ENCODE measurements at regions of chr16 and their contacts with region 1.

Region 1: GRCh38 chr16:69396187-69397061 is 10.6 kb upstream of the TERF2 start:
- DNase-seq: peak; percentile 71
- ATAC-seq: peak; percentile 27; the same call in 1 of the 2 replicates
- H3K4me3 Mint-ChIP-seq: no peak overlapping the region
- H3K27ac Mint-ChIP-seq: peak overlapping the region; percentile 22
- H3K4me1 Mint-ChIP-seq: peaks cover 12% of the 10 kb centered on the region
- H3K27me3 Mint-ChIP-seq: 0 out of 2 replicates have a peak, but pooled peaks cover 3% of the 10 kb centered on the region
- CTCF ChIP-seq: no peak; the same call in 1 of the 2 replicates

Region 2: DNA sequence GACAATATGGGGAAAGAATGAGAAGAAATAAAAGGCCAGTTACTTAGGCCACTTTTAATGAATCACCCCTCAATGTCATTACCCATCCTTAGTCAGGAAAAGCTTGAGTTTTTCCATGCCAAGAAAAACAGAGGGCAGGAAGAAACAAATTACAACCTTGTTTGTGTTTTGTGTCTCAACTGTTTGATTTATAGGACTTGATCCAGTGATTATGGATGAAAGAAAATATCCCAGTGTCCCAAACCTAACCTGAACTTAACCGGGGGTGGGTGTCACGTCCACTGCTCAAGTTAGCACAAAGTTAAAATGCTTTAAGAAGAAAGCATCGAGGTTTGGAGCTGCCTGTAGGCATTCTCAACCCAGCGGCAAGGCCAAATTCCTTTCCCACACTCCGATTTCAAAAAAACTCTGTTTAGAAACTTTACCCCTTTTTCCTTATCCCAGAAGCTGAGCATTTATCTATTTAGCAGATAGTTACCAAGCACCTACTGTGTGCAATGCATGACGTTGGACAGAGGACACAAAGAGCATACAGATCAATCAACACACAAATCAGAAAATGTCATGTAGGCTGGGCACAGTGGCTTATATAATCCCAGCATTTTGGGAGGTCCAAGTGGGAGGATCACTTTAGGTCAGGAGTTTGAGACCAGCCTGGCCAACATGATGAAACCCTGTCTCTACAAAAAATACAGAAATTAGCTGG is 14.0 kb after region 1 on chr16:
- CTCF ChIA-PET with region 1: interaction called, 17 read pairs
- POLR2A ChIA-PET with region 1: interaction called, 4 read pairs
- DNase-seq: no peak
- ATAC-seq: no peak
- H3K4me3 Mint-ChIP-seq: no peak overlapping the region
- H3K27ac Mint-ChIP-seq: no peak overlapping the region
- H3K4me1 Mint-ChIP-seq: no peaks in the 10 kb centered on the region
- H3K27me3 Mint-ChIP-seq: no peaks in the 10 kb centered on the region
- CTCF ChIP-seq: no peak

Region 3: GRCh38 chr16:69467531-69468204 is 71.2 kb after region 1 on chr16:
- CTCF ChIA-PET with region 1: interaction called, 13 read pairs
- POLR2A ChIA-PET with region 1: no interaction called
- DNase-seq: no peak
- ATAC-seq: no peak
- H3K4me3 Mint-ChIP-seq: no peak overlapping the region
- H3K27ac Mint-ChIP-seq: no peak overlapping the region
- H3K4me1 Mint-ChIP-seq: peaks cover 4% of the 10 kb centered on the region
- H3K27me3 Mint-ChIP-seq: no peaks in the 10 kb centered on the region
- CTCF ChIP-seq: no peak

Region 4: GRCh38 chr16:69494993-69495392 is 98.6 kb after region 1 on chr16:
- CTCF ChIA-PET with region 1: interaction called, 11 read pairs
- POLR2A ChIA-PET with region 1: no interaction called
- DNase-seq: peak; percentile 77
- ATAC-seq: peak; percentile 86
- H3K4me3 Mint-ChIP-seq: no peak overlapping the region
- H3K27ac Mint-ChIP-seq: peak overlapping the region; percentile 68; the same call in 1 of the 2 replicates
- H3K4me1 Mint-ChIP-seq: peaks cover 12% of the 10 kb centered on the region
- H3K27me3 Mint-ChIP-seq: no peaks in the 10 kb centered on the region
- CTCF ChIP-seq: peak; percentile 54

Region 5: GRCh38 chr16:69754469-69755310 is 358.3 kb after region 1 on chr16 and contains the start of gene NOB1:
- CTCF ChIA-PET with region 1: interaction called, 25 read pairs
- POLR2A ChIA-PET with region 1: no interaction called
- DNase-seq: peak; percentile 99
- ATAC-seq: peak; percentile 93
- H3K4me3 Mint-ChIP-seq: peak within 1 kb of the TSS; percentile 100
- H3K27ac Mint-ChIP-seq: peak within 1 kb of the TSS; percentile 98
- H3K4me1 Mint-ChIP-seq: peaks cover 11% of the 10 kb centered on the region
- H3K27me3 Mint-ChIP-seq: peaks cover 35% of the 10 kb centered on the region
- CTCF ChIP-seq: peak; percentile 94
- total RNA-seq, gene NOB1: 80.3 to 88.0 TPM (median 81.7 TPM) in 3 replicates